CD4-positive, alpha-beta T cell (primary cell): ENCODE measurements at regions of chr17 and their contacts with region 1.

Region 1: GRCh38 chr17:64599187-64599676 is 62.9 kb downstream of the SMURF2 start:
- DNase-seq: peak; percentile 15 to 74 (median 44)
- ATAC-seq: peak; percentile 97
- H3K4me3 ChIP-seq: no peak overlapping the region
- H3K4me3 Mint-ChIP-seq: peak overlapping the region; percentile 76
- H3K27ac ChIP-seq: peak overlapping the region in 1 of 2 donors; percentile 31
- H3K27ac Mint-ChIP-seq: peak overlapping the region; percentile 90
- H3K4me1 ChIP-seq: peaks cover 10% of the 10 kb centered on the region
- H3K4me1 Mint-ChIP-seq: peaks cover 45% of the 10 kb centered on the region
- H3K27me3 ChIP-seq: no peaks in the 10 kb centered on the region
- H3K27me3 Mint-ChIP-seq: no peaks in the 10 kb centered on the region
- CTCF ChIP-seq: no peak

Region 2: DNA sequence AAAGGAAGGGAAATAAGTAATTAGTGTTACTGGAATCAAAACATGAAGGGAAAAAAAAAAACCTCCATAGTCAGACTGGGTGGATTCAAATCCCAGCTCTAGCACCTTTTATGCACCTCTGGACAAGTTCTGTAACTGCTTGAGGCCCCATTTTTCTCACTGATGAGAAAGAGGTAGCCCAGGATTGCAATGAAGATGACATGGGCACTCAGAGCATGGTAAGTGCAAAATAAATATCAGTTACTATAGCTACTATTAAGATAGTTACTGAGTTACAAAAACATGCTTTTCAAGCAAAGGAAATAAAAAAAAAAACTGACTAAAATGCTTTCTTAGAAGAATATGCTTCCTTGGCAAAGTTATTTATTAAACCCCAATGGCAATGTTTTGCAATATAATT is 33.7 kb before region 1 on chr17:
- CTCF ChIA-PET with region 1: no interaction called
- POLR2A ChIA-PET with region 1: no interaction called
- intact Hi-C with region 1: no loop called
- DNase-seq: no peak
- ATAC-seq: no peak
- H3K4me3 ChIP-seq: no peak overlapping the region
- H3K4me3 Mint-ChIP-seq: no peak overlapping the region
- H3K27ac ChIP-seq: no peak overlapping the region
- H3K27ac Mint-ChIP-seq: no peak overlapping the region
- H3K4me1 ChIP-seq: no peaks in the 10 kb centered on the region
- H3K4me1 Mint-ChIP-seq: no peaks in the 10 kb centered on the region
- H3K27me3 ChIP-seq: no peaks in the 10 kb centered on the region
- H3K27me3 Mint-ChIP-seq: no peaks in the 10 kb centered on the region
- CTCF ChIP-seq: no peak

Region 3: GRCh38 chr17:64615028-64615677 is 15.9 kb after region 1 on chr17:
- CTCF ChIA-PET with region 1: interaction called, 4 read pairs
- POLR2A ChIA-PET with region 1: no interaction called
- intact Hi-C with region 1: loop called in 1 of 2 experiments (anchors 2 kb)
- DNase-seq: no peak
- ATAC-seq: no peak
- H3K4me3 ChIP-seq: no peak overlapping the region
- H3K4me3 Mint-ChIP-seq: no peak overlapping the region
- H3K27ac ChIP-seq: no peak overlapping the region
- H3K27ac Mint-ChIP-seq: peak overlapping the region; percentile 2
- H3K4me1 ChIP-seq: peaks cover 6% of the 10 kb centered on the region
- H3K4me1 Mint-ChIP-seq: peaks cover 50% of the 10 kb centered on the region
- H3K27me3 ChIP-seq: no peaks in the 10 kb centered on the region
- H3K27me3 Mint-ChIP-seq: no peaks in the 10 kb centered on the region
- CTCF ChIP-seq: no peak

Region 4: DNA sequence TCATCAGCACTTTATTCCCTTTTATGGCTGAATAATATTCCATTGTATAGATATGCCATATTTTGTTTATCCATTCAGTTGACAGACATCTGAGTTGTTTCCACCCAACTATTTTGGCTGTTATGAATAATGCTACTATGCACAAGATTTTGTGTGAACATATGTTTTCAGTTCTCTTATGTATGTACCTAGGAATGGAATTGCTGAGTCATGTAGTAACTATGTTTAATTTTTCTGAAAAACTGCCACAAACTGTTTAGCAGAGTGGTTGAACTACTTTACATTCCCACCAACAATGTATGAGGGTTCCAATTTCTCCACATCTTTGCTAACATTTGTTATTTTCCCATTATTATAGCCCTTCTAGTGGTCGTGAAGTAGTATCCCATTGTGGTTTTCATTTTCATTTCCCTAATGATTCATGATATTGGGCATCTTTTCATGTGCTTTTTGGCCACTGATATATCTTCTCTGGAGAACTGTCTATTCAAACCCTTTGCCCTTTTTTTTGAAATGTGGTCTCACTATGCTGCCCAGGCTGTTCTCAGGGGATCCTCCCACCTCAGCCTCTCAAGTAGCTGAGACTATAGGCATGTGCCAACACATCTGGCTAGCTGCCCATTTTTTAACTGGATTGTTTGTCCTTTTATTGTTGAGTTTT is 36.5 kb after region 1 on chr17:
- CTCF ChIA-PET with region 1: no interaction called
- POLR2A ChIA-PET with region 1: no interaction called
- intact Hi-C with region 1: loop called in 1 of 2 experiments (anchors 5 kb)
- DNase-seq: no peak
- ATAC-seq: no peak
- H3K4me3 ChIP-seq: no peak overlapping the region
- H3K4me3 Mint-ChIP-seq: no peak overlapping the region
- H3K27ac ChIP-seq: no peak overlapping the region
- H3K27ac Mint-ChIP-seq: no peak overlapping the region
- H3K4me1 ChIP-seq: peaks cover 25% of the 10 kb centered on the region
- H3K4me1 Mint-ChIP-seq: peaks cover 63% of the 10 kb centered on the region
- H3K27me3 ChIP-seq: no peaks in the 10 kb centered on the region
- H3K27me3 Mint-ChIP-seq: no peaks in the 10 kb centered on the region
- CTCF ChIP-seq: no peak

Region 5: DNA sequence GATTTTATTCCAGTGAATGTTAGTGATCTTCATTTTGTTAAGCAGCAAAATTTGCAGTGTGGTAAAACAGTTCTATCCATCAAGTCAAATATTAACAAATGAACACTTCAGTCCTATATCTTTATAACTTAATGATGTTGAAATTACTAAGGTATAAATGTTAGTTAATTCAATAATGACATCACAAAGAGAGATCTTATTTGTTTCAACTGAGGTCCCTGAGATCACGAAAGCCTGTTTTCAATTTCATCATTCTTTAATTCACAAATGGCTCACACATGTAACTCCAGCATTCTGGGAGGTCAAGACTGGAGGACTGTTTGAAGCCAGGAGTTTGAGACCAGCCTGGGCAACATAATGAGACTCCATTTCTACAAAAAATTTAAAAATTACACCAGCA is 49.0 kb after region 1 on chr17:
- CTCF ChIA-PET with region 1: no interaction called
- POLR2A ChIA-PET with region 1: interaction called, 5 read pairs
- intact Hi-C with region 1: loop called (anchors 1 to 5 kb)
- DNase-seq: no peak
- ATAC-seq: no peak
- H3K4me3 ChIP-seq: no peak overlapping the region
- H3K4me3 Mint-ChIP-seq: no peak overlapping the region
- H3K27ac ChIP-seq: no peak overlapping the region
- H3K27ac Mint-ChIP-seq: no peak overlapping the region
- H3K4me1 ChIP-seq: peaks cover 3% of the 10 kb centered on the region
- H3K4me1 Mint-ChIP-seq: peaks cover 59% of the 10 kb centered on the region
- H3K27me3 ChIP-seq: no peaks in the 10 kb centered on the region
- H3K27me3 Mint-ChIP-seq: no peaks in the 10 kb centered on the region
- CTCF ChIP-seq: no peak

Region 6: DNA sequence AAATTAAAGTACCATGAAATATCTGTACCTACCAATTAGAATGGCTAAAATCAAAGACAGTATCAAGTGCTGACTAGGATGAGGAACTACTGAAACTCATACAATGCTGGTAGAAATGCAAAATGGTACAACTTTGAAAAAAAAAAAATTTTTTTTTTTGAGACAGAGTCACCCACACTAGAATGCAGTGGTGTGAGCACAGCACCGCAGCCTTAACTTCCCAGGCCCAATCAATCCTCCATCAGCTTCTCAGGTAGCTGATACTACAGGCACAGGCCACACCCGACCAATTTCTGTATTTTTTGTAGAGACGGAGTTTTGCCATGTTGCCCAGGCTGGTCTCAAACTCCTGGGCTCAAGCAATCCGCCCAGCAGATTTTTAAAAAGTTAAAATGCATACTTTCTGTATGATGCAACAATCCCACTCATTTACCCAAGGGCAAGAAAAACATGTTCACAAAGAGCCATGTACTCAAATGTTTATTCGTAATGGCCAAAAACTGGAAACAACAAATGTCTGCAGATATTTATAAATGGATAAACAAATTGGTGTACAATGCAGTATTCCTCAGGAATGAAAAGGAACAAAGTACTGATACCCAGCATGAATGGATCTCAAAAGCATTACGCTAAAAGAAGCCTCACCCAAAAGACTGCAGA is 54.2 kb after region 1 on chr17:
- CTCF ChIA-PET with region 1: no interaction called
- POLR2A ChIA-PET with region 1: interaction called, 5 read pairs
- intact Hi-C with region 1: loop called (anchors 1 to 5 kb)
- DNase-seq: no peak
- ATAC-seq: no peak
- H3K4me3 ChIP-seq: no peak overlapping the region
- H3K4me3 Mint-ChIP-seq: no peak overlapping the region
- H3K27ac ChIP-seq: no peak overlapping the region
- H3K27ac Mint-ChIP-seq: no peak overlapping the region
- H3K4me1 ChIP-seq: peaks cover 16% of the 10 kb centered on the region
- H3K4me1 Mint-ChIP-seq: peaks cover 70% of the 10 kb centered on the region
- H3K27me3 ChIP-seq: no peaks in the 10 kb centered on the region
- H3K27me3 Mint-ChIP-seq: no peaks in the 10 kb centered on the region
- CTCF ChIP-seq: no peak